Ovary (tissue), 10 donors: ENCODE measurements at regions of chr4 and their contacts with region 1.

Region 1: DNA sequence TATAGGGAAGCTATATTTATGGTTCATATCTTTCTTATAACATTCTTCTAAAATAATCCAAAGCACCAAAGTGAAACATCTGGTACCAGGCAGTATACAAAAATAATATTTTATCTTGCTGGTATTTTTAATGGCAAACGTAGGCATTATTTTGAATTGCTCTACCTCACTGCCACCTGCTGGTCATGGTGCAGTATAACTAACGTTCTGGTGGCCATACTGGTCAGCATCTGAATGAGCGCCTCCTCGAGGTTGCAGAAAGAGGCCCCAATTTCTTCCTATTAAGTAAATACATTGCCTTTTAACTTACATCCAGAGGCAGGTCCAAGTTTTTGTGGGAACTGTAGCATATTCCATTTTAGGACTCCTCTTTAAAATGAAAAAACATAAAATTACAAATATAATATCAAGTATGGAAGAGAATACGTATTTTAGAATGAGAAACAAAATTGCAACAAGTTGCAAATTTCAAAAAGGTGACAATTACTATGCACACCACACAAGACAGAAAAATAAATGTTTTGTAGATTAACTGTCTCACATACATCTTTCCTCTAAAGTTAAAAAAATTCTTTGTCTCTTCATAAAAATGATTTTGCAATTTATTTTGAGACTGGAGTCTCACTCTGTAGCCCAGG is 22.9 kb upstream of the CWH43 start:
- DNase-seq: peak; percentile 34 to 59 (median 41)
- H3K4me3 ChIP-seq: no peak overlapping the region
- H3K27ac ChIP-seq: no peak overlapping the region
- H3K4me1 ChIP-seq: no peaks in the 10 kb centered on the region
- H3K27me3 ChIP-seq: no peaks in the 10 kb centered on the region
- CTCF ChIP-seq: peak; percentile 70 to 75 (median 73)
- EP300 ChIP-seq: no peak
- POLR2A ChIP-seq: no peak

Region 2: DNA sequence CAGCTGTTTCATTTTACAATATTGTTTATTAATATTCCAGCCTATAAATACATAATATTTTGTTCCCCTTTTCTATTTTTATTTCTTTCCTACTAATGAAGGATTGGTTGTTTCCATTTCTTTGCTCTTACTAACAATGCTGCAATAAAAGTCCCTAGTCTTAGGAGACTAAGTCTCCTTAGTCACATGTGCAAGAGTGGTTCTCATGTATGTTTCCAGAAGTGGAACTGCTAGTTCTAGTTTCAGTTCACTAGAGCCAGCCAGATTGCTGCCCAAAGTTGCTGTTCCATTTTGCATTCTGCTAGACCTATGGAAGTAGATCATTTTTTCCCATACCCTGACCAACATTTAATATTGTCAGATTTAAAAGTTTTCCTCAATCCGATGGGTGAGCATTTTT is 991.0 kb before region 1 on chr4:
- intact Hi-C with region 1: no loop called
- DNase-seq: no peak
- H3K4me3 ChIP-seq: no peak overlapping the region
- H3K27ac ChIP-seq: no peak overlapping the region
- H3K4me1 ChIP-seq: no peaks in the 10 kb centered on the region
- H3K27me3 ChIP-seq: no peaks in the 10 kb centered on the region
- CTCF ChIP-seq: no peak
- EP300 ChIP-seq: no peak
- POLR2A ChIP-seq: no peak

Region 3: DNA sequence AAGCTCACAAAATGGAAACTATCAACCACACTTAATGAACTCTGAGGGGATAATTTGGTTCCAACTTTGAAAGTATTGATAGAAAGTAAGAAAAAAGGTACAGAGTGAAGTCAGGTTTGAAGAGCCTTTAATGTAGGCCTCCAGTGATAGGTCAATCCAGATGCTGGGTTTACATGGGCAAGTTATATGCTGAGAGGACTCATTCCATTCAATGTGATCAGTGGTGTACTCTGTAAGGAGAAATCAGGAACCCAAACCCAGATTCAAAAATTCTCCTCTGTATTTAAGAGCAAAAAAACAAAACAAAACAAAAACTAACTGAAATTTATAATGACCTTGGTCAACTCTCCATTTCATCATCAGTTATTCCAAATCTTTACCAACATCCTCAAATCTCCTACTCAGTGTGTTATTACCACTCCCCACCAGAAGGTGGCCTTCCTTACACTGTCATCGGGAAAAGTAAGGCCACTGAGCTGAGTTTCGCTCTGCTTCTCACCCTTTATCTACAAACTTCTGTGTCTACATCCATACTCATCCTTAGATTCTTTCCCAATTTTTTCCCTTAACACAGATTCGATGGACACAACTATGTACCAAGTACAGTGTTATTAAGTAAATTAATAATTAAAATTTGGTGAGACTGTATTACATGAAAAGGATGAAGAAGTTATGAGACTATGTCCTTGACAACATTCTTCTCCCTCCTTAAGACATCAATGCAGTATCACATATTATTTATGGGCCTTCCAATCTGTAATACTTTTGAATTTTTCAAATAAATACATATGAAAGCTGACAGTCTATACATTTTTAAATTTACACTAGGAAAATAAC is 384.8 kb before region 1 on chr4:
- intact Hi-C with region 1: loop called in 3 of 4 experiments (anchors 5 kb)
- DNase-seq: peak in 4 of 5 donors; percentile 21 to 71 (median 36)
- H3K4me3 ChIP-seq: no peak overlapping the region
- H3K27ac ChIP-seq: no peak overlapping the region
- H3K4me1 ChIP-seq: no peaks in the 10 kb centered on the region
- H3K27me3 ChIP-seq: no peaks in the 10 kb centered on the region
- CTCF ChIP-seq: peak; percentile 65 to 74 (median 66)
- EP300 ChIP-seq: no peak
- POLR2A ChIP-seq: no peak

Region 4: GRCh38 chr4:48944756-48945241 is 18.4 kb before region 1 on chr4:
- intact Hi-C with region 1: no loop called
- DNase-seq: no peak
- H3K4me3 ChIP-seq: no peak overlapping the region
- H3K27ac ChIP-seq: no peak overlapping the region
- H3K4me1 ChIP-seq: no peaks in the 10 kb centered on the region
- H3K27me3 ChIP-seq: no peaks in the 10 kb centered on the region
- CTCF ChIP-seq: no peak
- EP300 ChIP-seq: no peak
- POLR2A ChIP-seq: no peak